A549 (cell line): ENCODE measurements at regions of chr11 and their contacts with region 1.

Region 1: GRCh38 chr11:27395556-27396260 is 32.7 kb upstream of the CCDC34 start:
- DNase-seq: peak; percentile 40 to 97
- ATAC-seq: peak; percentile 90 to 95
- H3K4me3 ChIP-seq: peak overlapping the region; percentile 26; the same call in 2 of the 3 replicates
- H3K27ac ChIP-seq: peak overlapping the region; percentile 90 to 96
- H3K4me1 ChIP-seq: peaks cover 93% of the 10 kb centered on the region
- CTCF ChIP-seq: no peak
- EP300 ChIP-seq: peak; percentile 94
- POLR2A ChIP-seq: no peak
- RAD21 ChIP-seq: peak; percentile 19 to 56; a peak in 3 of 5 replicates

Region 2: GRCh38 chr11:27464154-27464759 is 68.5 kb after region 1 on chr11:
- CTCF ChIA-PET with region 1: interaction called, 6 read pairs
- POLR2A ChIA-PET with region 1: interaction called, 12 read pairs
- DNase-seq: peak in 1 of 2 experiments; percentile 79
- ATAC-seq: peak; percentile 75 to 85
- H3K4me3 ChIP-seq: no peak overlapping the region; the same call in 2 of the 3 replicates
- H3K27ac ChIP-seq: peak overlapping the region; percentile 85 to 98
- H3K4me1 ChIP-seq: peaks cover 94% of the 10 kb centered on the region
- CTCF ChIP-seq: no peak
- EP300 ChIP-seq: peak; percentile 44 to 74; a peak in 3 of 5 replicates
- POLR2A ChIP-seq: no peak
- RAD21 ChIP-seq: 0 out of 5 replicates have a peak, but pooled peaks of 1 of the 2 experiments have one; percentile 11

Region 3: GRCh38 chr11:27563201-27563600 is 167.5 kb after region 1 on chr11:
- CTCF ChIA-PET with region 1: no interaction called
- POLR2A ChIA-PET with region 1: no interaction called
- DNase-seq: no peak
- ATAC-seq: no peak
- H3K4me3 ChIP-seq: no peak overlapping the region
- H3K27ac ChIP-seq: no peak overlapping the region
- H3K4me1 ChIP-seq: no peaks in the 10 kb centered on the region
- CTCF ChIP-seq: no peak
- EP300 ChIP-seq: no peak
- POLR2A ChIP-seq: no peak
- RAD21 ChIP-seq: no peak